ENCODE measurements at regions of chr4 and their contacts with region 1.

Region 1: DNA sequence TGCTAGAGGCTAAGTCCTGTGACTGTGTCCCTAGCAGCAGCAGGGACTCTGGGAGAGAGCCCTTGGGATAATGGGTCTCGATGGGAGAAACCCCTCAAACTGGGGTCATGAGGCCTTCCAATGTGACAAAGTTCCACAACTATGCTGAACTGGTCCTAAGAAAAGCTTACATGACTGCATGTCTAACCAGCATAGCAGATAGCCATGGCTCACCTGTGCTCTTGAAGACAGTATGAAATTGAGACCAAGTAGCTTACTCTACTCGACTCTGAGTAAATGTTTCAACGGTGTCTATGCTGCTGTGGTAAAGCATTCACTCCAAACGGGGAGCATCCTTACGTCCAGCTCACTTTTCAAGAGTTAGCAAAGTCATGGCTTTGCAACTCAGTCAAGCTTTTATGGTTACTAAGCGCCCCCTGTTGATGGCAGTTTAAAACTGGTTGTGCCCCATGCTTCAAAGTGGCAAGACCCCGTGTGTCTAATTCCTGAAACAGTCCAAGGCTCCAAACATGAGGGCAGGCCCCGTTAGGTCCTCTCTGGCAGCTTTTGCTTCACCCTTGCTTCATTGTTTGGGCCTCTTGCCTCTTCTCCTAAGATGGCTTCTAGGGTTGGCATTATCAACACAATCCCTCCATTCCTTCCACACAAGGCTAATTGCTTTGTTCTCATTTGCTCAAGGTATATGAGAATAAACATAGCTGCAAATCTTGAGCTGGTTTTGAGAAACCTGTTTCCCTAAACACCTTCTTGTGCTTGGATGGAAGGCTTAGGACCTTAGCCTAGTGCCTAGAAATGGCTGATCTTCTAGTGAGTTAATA is 46.6 kb downstream of the CCNG2 start:
- DNase-seq: peak; percentile 82
- ATAC-seq: peak; percentile 80
- H3K4me3 Mint-ChIP-seq: no peak overlapping the region
- H3K27ac Mint-ChIP-seq: no peak overlapping the region
- H3K4me1 Mint-ChIP-seq: peaks cover 12% of the 10 kb centered on the region
- H3K27me3 Mint-ChIP-seq: peaks cover 6% of the 10 kb centered on the region

Region 2: GRCh38 chr4:77065382-77065781 is 138.2 kb before region 1 on chr4:
- CTCF ChIA-PET with region 1: interaction called, 54 read pairs
- POLR2A ChIA-PET with region 1: no interaction called
- DNase-seq: no peak
- ATAC-seq: no peak
- H3K4me3 Mint-ChIP-seq: no peak overlapping the region
- H3K27ac Mint-ChIP-seq: peak overlapping the region; percentile 15
- H3K4me1 Mint-ChIP-seq: peaks cover 23% of the 10 kb centered on the region
- H3K27me3 Mint-ChIP-seq: no peaks in the 10 kb centered on the region

Region 3: GRCh38 chr4:77089866-77090265 is 113.7 kb before region 1 on chr4:
- CTCF ChIA-PET with region 1: interaction called, 296 read pairs
- POLR2A ChIA-PET with region 1: no interaction called
- DNase-seq: no peak
- ATAC-seq: no peak
- H3K4me3 Mint-ChIP-seq: no peak overlapping the region
- H3K27ac Mint-ChIP-seq: no peak overlapping the region
- H3K4me1 Mint-ChIP-seq: peaks cover 3% of the 10 kb centered on the region
- H3K27me3 Mint-ChIP-seq: no peaks in the 10 kb centered on the region

Region 4: DNA sequence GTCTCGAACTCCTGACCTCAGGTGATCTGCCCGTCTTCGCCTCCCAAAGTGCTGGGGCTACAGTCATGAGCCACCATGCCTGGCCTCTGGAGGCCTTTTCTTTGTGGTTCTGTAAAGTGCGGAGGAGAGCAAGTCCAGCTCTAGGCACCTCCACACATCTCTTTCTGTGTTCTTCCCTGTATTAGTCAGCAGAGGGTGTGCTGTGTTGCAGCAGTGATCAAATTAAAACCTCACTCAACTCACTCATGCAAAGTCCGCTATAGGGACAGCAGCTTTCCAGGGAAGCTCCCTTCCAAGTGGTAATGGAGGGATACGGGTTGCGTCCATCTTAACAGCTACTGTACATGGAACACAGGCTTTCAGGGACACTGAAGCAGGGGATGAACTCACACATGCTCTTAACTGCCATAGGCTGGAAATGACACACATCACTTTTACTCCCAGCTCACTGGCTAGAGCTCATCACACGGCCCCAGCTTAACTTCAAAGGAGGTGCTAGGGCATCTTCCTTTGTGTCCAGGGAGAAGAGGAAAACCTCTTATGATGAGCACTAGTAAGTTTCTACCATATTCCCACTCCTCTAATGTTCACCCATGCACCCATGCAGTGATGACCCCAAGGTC is 82.6 kb before region 1 on chr4:
- CTCF ChIA-PET with region 1: interaction called, 16 read pairs
- POLR2A ChIA-PET with region 1: no interaction called
- DNase-seq: no peak
- ATAC-seq: no peak
- H3K4me3 Mint-ChIP-seq: no peak overlapping the region
- H3K27ac Mint-ChIP-seq: no peak overlapping the region
- H3K4me1 Mint-ChIP-seq: no peaks in the 10 kb centered on the region
- H3K27me3 Mint-ChIP-seq: peaks cover 10% of the 10 kb centered on the region

Region 5: GRCh38 chr4:77163636-77164035 is 40.0 kb before region 1 on chr4:
- CTCF ChIA-PET with region 1: interaction called, 59 read pairs
- POLR2A ChIA-PET with region 1: interaction called, 4 read pairs
- DNase-seq: no peak
- ATAC-seq: no peak
- H3K4me3 Mint-ChIP-seq: no peak overlapping the region
- H3K27ac Mint-ChIP-seq: no peak overlapping the region
- H3K4me1 Mint-ChIP-seq: peaks cover 32% of the 10 kb centered on the region
- H3K27me3 Mint-ChIP-seq: no peaks in the 10 kb centered on the region

Region 6: GRCh38 chr4:77226939-77227705 is 23.5 kb after region 1 on chr4:
- CTCF ChIA-PET with region 1: interaction called, 12 read pairs
- POLR2A ChIA-PET with region 1: no interaction called
- DNase-seq: no peak
- ATAC-seq: no peak
- H3K4me3 Mint-ChIP-seq: no peak overlapping the region
- H3K27ac Mint-ChIP-seq: no peak overlapping the region
- H3K4me1 Mint-ChIP-seq: no peaks in the 10 kb centered on the region
- H3K27me3 Mint-ChIP-seq: peaks cover 7% of the 10 kb centered on the region

Measured in activated CD8-positive, alpha-beta T cell treated with anti-CD3 and anti-CD28 coated beads, Interleukin-2, amount 10 ng/mL, durations not matched to agents 7 days and 5 days (primary cell).